Posterior vena cava (tissue), 2 donors: ENCODE measurements at regions of chr2 and their contacts with region 1.

Region 1: GRCh38 chr2:77807531-77808215 is 285.5 kb upstream of the LRRTM4 start:
- DNase-seq: no peak

Region 2: GRCh38 chr2:78029392-78029995 is 221.8 kb after region 1 on chr2:
- intact Hi-C with region 1: loop called in 1 of 2 experiments (anchors 5 kb)
- DNase-seq: no peak